ENCODE measurements at regions of chr1 and their contacts with region 1.

Region 1: GRCh38 chr1:1349256-1350012 is at the start of gene DVL1:
- DNase-seq: peak; percentile 87
- H3K4me3 ChIP-seq: peak within 1 kb of the TSS; percentile 58 to 80 (median 70)
- H3K27ac ChIP-seq: peak within 1 kb of the TSS; percentile 87 to 96 (median 95)
- H3K4me1 ChIP-seq: peaks cover 0 to 72% (median 61%) of the 10 kb centered on the region in 4 donors
- H3K27me3 ChIP-seq: no peaks in the 10 kb centered on the region
- CTCF ChIP-seq: peak; percentile 32 to 61 (median 53)
- EP300 ChIP-seq: no peak
- POLR2A ChIP-seq: no peak
- total RNA-seq, gene DVL1: 50.7 to 85.0 (median 61.9) TPM

Region 2: GRCh38 chr1:1324521-1325287 is 24.7 kb before region 1 on chr1 and contains the starts of genes CPTP and INTS11:
- intact Hi-C with region 1: loop called (anchors 2 kb)
- DNase-seq: peak; percentile 97
- H3K4me3 ChIP-seq: peak within 1 kb of the TSS; percentile 87 to 100 (median 98)
- H3K27ac ChIP-seq: peak within 1 kb of the TSS; percentile 90 to 94 (median 92)
- H3K4me1 ChIP-seq: peaks cover 3 to 59% (median 47%) of the 10 kb centered on the region in 4 donors
- H3K27me3 ChIP-seq: no peaks in the 10 kb centered on the region
- CTCF ChIP-seq: no peak
- EP300 ChIP-seq: no peak
- POLR2A ChIP-seq: peak; percentile 53 to 79
- total RNA-seq, gene CPTP: 8.4 to 21.6 (median 10.5) TPM
- total RNA-seq, gene INTS11: 83.8 to 135 (median 93.4) TPM

Region 3: DNA sequence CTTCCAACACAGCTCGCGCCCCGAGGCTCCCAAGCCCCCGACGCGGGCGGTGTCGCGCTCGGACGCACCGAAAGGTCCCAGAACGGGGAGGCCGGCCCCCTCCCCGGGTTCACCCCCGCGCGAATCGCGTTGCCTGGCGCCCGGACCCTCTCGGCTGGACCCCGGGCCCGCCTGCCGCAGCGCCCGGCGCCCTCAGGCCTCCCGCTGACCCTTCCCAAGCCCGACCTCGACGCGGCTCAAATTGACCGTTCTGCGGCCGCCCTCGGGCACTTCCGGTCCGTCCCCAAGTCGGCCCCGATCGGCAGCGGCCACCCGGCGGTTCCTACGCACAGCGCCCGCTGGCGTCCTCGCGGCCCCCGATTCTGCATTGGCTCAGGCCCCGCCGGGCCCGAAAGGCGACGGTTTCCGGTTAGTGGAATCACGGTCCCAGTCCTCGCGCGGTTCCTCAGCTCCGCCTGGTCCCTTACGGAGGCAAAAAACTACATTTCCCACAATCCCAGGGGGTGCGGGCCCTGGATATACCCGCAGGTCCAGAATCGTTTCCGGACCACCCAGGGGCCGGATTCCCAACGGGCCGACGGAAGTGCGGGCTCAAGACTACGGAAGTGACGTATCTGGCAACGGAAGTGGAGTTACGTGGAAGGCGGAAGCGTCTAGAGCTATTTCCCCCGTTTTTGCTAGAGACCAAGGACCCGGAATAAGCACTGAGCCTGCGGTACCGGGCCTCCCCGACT is 25.7 kb after region 1 on chr1 and contains the start of gene AURKAIP1:
- intact Hi-C with region 1: loop called (anchors 2 kb)
- DNase-seq: peak; percentile 100
- H3K4me3 ChIP-seq: peak within 1 kb of the TSS; percentile 69 to 100 (median 96)
- H3K27ac ChIP-seq: peak within 1 kb of the TSS; percentile 92 to 98 (median 95)
- H3K4me1 ChIP-seq: peaks cover 2 to 41% (median 34%) of the 10 kb centered on the region in 4 donors
- H3K27me3 ChIP-seq: no peaks in the 10 kb centered on the region
- CTCF ChIP-seq: peak in 1 of 4 experiments; percentile 18
- EP300 ChIP-seq: peak in 1 of 4 donors; percentile 71
- POLR2A ChIP-seq: peak; percentile 24 to 42
- total RNA-seq, gene AURKAIP1: 89.3 to 143 (median 124) TPM

Measured in sigmoid colon (tissue), 7 donors.